Activated B cell treated with CpG ODN at 0.5 μM for 24 hours (primary cell): ENCODE measurements at regions of chr5 and their contacts with region 1.

Region 1: GRCh38 chr5:83321483-83322055 is 150.0 kb upstream of the VCAN start:
- DNase-seq: no peak
- ATAC-seq: no peak
- H3K4me3 Mint-ChIP-seq: no peak overlapping the region
- H3K27ac Mint-ChIP-seq: no peak overlapping the region
- H3K4me1 Mint-ChIP-seq: no peaks in the 10 kb centered on the region
- H3K27me3 Mint-ChIP-seq: no peaks in the 10 kb centered on the region
- CTCF ChIP-seq: no peak

Region 2: DNA sequence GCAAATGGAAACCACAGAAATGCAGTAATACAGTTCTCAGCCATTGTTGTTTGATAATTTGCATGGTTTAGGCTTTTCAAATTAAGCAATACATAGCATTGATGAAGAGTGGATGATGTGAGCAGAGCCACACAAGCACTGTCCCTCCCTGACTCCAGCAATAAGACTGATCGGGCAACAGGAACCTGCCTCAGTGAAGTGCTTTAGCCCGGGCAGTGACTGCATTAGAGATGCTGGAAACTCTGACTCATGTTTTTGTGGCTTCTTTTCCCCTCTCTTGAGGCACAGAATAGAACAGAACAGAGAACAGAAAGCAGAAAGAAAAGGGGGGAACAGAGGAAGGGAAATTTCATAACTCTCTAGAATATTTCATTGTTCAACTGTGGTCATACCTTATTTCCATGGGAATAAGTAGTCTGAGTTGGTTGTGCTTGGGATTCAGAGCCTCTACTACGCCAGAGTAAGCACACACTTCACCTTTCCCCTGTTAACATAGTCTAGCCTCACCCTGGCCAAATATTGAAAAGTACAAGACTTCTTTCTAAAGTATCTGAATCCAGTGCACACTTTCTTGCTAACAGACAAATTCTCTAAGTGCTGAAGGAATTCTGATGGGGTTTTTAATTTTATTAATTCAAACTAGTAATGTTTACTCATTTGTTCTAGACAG is 14.9 kb before region 1 on chr5:
- CTCF ChIA-PET with region 1: no interaction called
- POLR2A ChIA-PET with region 1: no interaction called
- intact Hi-C with region 1: loop called (anchors 2 kb)
- DNase-seq: no peak
- ATAC-seq: peak; percentile 94
- H3K4me3 Mint-ChIP-seq: no peak overlapping the region
- H3K27ac Mint-ChIP-seq: no peak overlapping the region
- H3K4me1 Mint-ChIP-seq: peaks cover 12% of the 10 kb centered on the region
- H3K27me3 Mint-ChIP-seq: no peaks in the 10 kb centered on the region
- CTCF ChIP-seq: no peak

Region 3: GRCh38 chr5:83473346-83474163 is 152.0 kb after region 1 on chr5:
- CTCF ChIA-PET with region 1: no interaction called
- POLR2A ChIA-PET with region 1: no interaction called
- intact Hi-C with region 1: no loop called
- DNase-seq: peak; percentile 33
- ATAC-seq: peak; percentile 56
- H3K4me3 Mint-ChIP-seq: peak overlapping the region; percentile 76
- H3K27ac Mint-ChIP-seq: no peak overlapping the region
- H3K4me1 Mint-ChIP-seq: peaks cover 38% of the 10 kb centered on the region
- H3K27me3 Mint-ChIP-seq: peaks cover 58% of the 10 kb centered on the region
- CTCF ChIP-seq: no peak